WTC11 (cell line): ENCODE measurements at regions of chr4 and their contacts with region 1.

Region 1: GRCh38 chr4:54233277-54233696 is 4.2 kb downstream of the PDGFRA start:
- DNase-seq: peak; percentile 84
- ATAC-seq: peak; percentile 57
- H3K4me3 Mint-ChIP-seq: peak overlapping the region; percentile 82
- H3K27ac Mint-ChIP-seq: no peak overlapping the region
- H3K4me1 Mint-ChIP-seq: peaks cover 32% of the 10 kb centered on the region
- H3K27me3 Mint-ChIP-seq: peaks cover 76% of the 10 kb centered on the region
- CTCF ChIP-seq: peak; percentile 7; the same call in 1 of the 2 replicates

Region 2: DNA sequence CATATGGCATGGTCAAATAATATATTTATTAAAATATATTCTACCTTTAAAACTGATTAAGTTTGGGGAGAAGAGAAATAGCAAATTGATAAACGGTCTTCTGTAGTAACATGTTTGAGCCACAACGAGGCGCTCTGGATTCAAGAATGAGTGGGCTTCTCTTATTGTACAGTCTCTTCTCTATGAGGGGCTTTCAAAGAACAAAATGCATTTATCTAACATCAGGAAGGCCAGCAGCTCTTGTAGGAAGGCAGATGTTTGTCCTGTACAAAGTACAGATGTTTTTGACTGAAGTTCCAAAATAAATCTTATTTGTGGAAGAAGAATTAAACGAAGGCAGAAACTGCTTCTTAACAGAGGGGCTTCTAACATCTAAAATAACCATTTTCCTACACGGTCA is 1217.6 kb before region 1 on chr4:
- CTCF ChIA-PET with region 1: interaction called, 15 read pairs
- POLR2A ChIA-PET with region 1: no interaction called
- DNase-seq: peak; percentile 44
- ATAC-seq: no peak
- H3K4me3 Mint-ChIP-seq: no peak overlapping the region
- H3K27ac Mint-ChIP-seq: no peak overlapping the region
- H3K4me1 Mint-ChIP-seq: peaks cover 8% of the 10 kb centered on the region; the same call in 1 of the 2 replicates
- H3K27me3 Mint-ChIP-seq: no peaks in the 10 kb centered on the region
- CTCF ChIP-seq: peak; percentile 48

Region 3: GRCh38 chr4:53490965-53491622 is 742.2 kb before region 1 on chr4:
- CTCF ChIA-PET with region 1: interaction called, 13 read pairs
- POLR2A ChIA-PET with region 1: no interaction called
- DNase-seq: peak; percentile 21
- ATAC-seq: peak; percentile 71
- H3K4me3 Mint-ChIP-seq: no peak overlapping the region
- H3K27ac Mint-ChIP-seq: no peak overlapping the region
- H3K4me1 Mint-ChIP-seq: peaks cover 14% of the 10 kb centered on the region
- H3K27me3 Mint-ChIP-seq: no peaks in the 10 kb centered on the region
- CTCF ChIP-seq: no peak

Region 4: DNA sequence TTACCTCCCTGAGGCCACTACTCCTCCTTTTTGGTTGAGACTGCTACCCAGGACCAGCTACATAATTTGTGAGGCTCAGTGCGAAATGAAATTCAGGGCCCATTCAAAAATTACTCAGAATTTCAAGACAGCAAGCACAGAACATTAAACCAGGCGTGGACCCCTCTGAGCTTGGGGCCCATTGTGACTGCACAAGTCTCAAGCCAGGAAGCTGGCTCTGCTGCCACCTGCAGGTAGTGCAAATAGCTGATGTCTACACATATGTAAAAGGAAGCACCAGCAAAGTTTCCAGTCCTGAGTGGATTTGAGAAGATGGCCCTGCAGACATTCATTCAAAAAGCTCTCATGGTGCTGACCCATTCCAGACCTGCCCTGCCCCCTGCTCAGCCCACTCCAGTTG is 428.6 kb before region 1 on chr4:
- CTCF ChIA-PET with region 1: interaction called, 21 read pairs
- POLR2A ChIA-PET with region 1: no interaction called
- DNase-seq: peak; percentile 72
- ATAC-seq: peak; percentile 82
- H3K4me3 Mint-ChIP-seq: no peak overlapping the region
- H3K27ac Mint-ChIP-seq: no peak overlapping the region
- H3K4me1 Mint-ChIP-seq: no peaks in the 10 kb centered on the region
- H3K27me3 Mint-ChIP-seq: no peaks in the 10 kb centered on the region
- CTCF ChIP-seq: peak; percentile 28; the same call in 1 of the 2 replicates

Region 5: DNA sequence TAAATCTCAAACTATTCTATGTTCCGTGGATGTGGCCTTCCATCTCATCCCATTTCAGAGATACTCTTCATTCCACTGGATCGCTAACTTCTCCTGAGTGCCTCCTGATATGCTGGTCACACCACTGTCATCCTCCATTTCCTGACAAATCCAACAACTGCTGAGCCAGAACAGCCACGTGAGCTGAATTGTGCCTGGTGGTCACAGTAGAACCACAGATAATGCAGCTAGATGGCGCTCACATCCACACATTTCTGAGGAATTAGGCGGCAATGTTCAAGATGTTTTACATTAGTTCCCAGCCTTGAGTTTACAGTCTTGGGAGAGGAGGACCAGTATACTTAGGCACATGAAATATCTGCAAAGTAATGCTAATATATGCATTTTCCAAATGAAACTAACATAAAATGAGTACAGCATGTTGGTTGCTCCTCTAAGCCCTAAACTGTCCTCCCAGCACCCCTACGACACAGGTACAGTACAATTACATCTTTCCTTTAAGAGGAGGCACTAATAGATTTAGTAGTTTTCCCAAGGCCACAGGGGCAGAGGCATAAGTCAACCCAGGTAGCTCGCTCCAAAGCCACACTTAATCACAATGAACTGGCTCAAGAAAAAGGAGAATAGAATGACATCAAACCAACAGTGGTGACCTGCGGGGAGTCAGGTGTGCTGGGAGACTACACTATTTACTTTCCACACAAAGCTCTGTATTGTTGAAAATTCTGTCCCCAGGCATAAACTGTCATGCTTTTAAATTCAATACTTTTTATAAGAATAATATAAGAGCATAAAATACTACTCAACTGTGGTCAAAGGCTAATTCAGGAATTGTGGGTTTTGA is 303.1 kb before region 1 on chr4:
- CTCF ChIA-PET with region 1: interaction called, 47 read pairs
- POLR2A ChIA-PET with region 1: no interaction called
- DNase-seq: peak; percentile 69
- ATAC-seq: peak; percentile 97
- H3K4me3 Mint-ChIP-seq: no peak overlapping the region
- H3K27ac Mint-ChIP-seq: no peak overlapping the region
- H3K4me1 Mint-ChIP-seq: no peaks in the 10 kb centered on the region
- H3K27me3 Mint-ChIP-seq: no peaks in the 10 kb centered on the region
- CTCF ChIP-seq: peak; percentile 53

Region 6: DNA sequence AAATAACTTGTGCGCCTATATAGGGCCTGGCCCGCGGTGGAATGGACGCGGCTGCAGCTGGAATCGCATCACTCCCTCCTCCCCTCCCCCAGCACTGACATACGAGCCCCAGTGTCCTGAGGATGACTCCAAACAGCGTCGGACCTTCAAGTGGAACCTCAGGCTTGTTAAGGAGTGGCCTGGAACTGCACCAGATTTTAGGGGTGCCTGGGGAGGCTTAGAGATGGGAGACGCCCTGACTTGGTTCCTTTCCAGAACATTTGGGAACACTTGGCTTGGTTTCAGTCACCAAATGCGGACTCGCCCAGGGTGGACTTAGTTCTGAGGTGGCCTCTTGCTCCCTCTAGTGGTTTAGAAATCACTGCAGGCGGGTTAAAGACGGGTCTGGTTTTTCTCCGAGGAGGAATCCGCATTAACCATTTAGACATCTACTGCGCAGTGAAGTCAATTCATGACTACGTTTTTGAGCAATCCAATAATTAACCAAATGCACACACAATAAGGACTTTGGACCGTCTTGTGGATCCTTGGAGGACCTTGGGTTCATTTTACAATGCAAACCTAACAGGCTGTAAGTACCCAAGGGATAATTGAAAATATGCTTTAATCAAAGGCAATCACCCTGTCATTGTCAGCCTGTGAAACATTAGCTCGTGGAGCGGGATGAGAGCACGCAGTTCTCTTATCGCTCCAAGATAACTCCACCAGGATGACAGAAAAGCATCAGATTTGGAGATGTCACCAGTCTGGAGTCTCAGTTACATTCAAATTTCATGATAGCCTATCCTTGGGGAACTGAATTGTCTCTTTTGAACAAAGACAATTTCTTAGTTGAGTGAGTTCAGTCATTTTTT is 15.4 kb before region 1 on chr4:
- CTCF ChIA-PET with region 1: interaction called, 49 read pairs
- POLR2A ChIA-PET with region 1: no interaction called
- DNase-seq: peak; percentile 69
- ATAC-seq: peak; percentile 92
- H3K4me3 Mint-ChIP-seq: peak overlapping the region; percentile 68
- H3K27ac Mint-ChIP-seq: no peak overlapping the region
- H3K4me1 Mint-ChIP-seq: peaks cover 11% of the 10 kb centered on the region
- H3K27me3 Mint-ChIP-seq: peaks cover 62% of the 10 kb centered on the region
- CTCF ChIP-seq: peak; percentile 84